Esophagus squamous epithelium (tissue), 5 donors: ENCODE measurements at regions of chr10 and their contacts with region 1.

Region 1: DNA sequence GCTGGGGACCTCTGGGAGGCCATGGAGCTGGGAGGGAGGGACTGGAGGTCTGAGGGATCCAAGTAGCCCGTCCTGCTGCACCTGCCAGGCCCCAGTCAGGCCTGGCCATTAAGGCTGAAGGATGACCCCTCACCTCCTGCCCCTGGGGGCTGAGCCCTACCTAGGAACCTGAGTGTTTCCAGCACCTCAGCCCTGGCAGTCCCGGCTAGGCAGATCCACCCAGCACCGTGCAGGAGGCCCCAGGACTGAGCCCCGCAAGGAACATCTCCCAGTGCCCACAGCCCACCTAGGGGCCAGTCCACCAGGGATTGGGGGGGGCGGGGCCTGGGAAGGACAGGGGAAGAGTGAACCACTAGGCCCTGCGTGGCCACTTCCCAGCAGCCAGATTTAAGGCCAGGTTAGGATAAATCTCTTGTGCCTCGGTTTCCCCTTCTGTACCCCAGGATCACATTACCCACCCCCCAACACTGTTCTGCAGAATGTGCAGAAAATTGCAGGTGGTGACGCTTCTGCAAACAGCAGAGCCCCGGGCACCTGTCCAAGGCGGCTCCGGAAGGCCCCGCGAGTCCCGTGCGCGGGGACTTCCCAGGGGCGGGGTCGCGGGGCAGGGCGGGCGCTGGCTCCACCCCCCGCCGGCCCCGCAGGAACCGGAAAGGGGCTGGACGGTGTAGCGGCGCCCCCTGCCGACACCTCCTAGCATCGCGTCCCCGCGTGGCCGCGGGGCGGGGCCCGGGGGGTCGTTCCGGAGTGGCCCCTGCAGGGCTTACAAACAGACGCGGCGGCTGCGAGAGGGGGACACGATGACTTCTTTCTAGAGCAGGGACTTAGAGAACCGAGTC is 55.9 kb downstream of the PWWP2B start:
- DNase-seq: no peak
- H3K4me3 ChIP-seq: peak overlapping the region in 3 of 4 donors; percentile 17 to 51 (median 24)
- H3K27ac ChIP-seq: peak overlapping the region in 3 of 4 donors; percentile 53 to 70 (median 55)
- H3K4me1 ChIP-seq: peaks cover 20 to 50% (median 23%) of the 10 kb centered on the region in 3 donors
- H3K27me3 ChIP-seq: peaks cover 0 to 25% (median 0%) of the 10 kb centered on the region in 4 donors
- CTCF ChIP-seq: peak; percentile 95 to 99 (median 99)
- POLR2A ChIP-seq: no peak

Region 2: DNA sequence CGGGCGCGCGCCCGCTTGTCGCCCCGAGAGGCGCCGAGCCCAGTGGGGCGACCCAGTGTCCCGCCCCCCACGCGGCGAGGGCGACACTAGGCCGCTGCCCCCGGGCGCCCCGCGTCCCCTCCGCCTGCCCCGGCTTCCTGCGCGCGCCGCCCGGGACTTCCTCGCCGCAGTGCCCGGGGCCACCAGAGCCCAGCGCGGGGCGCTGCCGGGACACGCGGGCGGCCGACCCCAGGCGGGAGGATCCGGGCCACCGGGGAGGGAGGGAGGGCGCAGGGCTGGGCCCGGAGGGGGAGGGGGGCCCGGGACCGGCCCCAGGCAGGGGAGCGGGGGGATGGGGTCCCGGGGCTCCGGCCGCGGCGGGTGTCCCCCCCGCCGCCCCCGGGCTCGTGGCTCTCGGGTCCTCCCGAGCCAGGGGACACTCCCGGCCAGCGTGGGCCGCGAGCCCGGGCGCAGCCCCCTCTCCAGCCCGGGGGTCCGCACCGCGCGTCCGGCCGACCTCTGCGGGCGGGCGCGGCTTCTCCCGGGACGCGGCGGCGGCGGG is 56.3 kb before region 1 on chr10:
- intact Hi-C with region 1: loop called (anchors 2 kb)
- DNase-seq: no peak
- H3K4me3 ChIP-seq: peak overlapping the region; percentile 68 to 87 (median 71)
- H3K27ac ChIP-seq: peak overlapping the region; percentile 82 to 98 (median 97)
- H3K4me1 ChIP-seq: peaks cover 38 to 57% (median 51%) of the 10 kb centered on the region in 3 donors
- H3K27me3 ChIP-seq: no peaks in the 10 kb centered on the region
- CTCF ChIP-seq: peak in 5 of 6 experiments; percentile 18 to 57 (median 47)
- POLR2A ChIP-seq: no peak

Region 3: GRCh38 chr10:132627666-132628531 is 175.0 kb after region 1 on chr10:
- intact Hi-C with region 1: no loop called
- DNase-seq: no peak
- H3K4me3 ChIP-seq: peak overlapping the region in 1 of 4 donors; percentile 34
- H3K27ac ChIP-seq: peak overlapping the region; percentile 51 to 88 (median 82)
- H3K4me1 ChIP-seq: peaks cover 13 to 84% (median 50%) of the 10 kb centered on the region in 3 donors
- H3K27me3 ChIP-seq: no peaks in the 10 kb centered on the region
- CTCF ChIP-seq: no peak
- POLR2A ChIP-seq: peak in 1 of 4 donors; percentile 10